Endothelial cell of umbilical vein (primary cell): ENCODE measurements at regions of chr10 and their contacts with region 1.

Region 1: GRCh38 chr10:16950656-16951601 is 133.7 kb upstream of the RSU1 start:
- DNase-seq: peak; percentile 89
- H3K4me3 ChIP-seq: no peak overlapping the region
- H3K27ac ChIP-seq: peak overlapping the region; percentile 66
- H3K4me1 ChIP-seq: peaks cover 40% of the 10 kb centered on the region
- H3K27me3 ChIP-seq: no peaks in the 10 kb centered on the region
- CTCF ChIP-seq: no peak
- POLR2A ChIP-seq: no peak

Region 2: GRCh38 chr10:15642095-15642494 is 1308.8 kb before region 1 on chr10:
- CTCF ChIA-PET with region 1: no interaction called
- POLR2A ChIA-PET with region 1: no interaction called
- dilution Hi-C with region 1: no loop called
- intact Hi-C with region 1: no loop called
- DNase-seq: peak; percentile 67
- H3K4me3 ChIP-seq: no peak overlapping the region
- H3K27ac ChIP-seq: no peak overlapping the region
- H3K4me1 ChIP-seq: peaks cover 8% of the 10 kb centered on the region
- H3K27me3 ChIP-seq: no peaks in the 10 kb centered on the region
- CTCF ChIP-seq: no peak
- POLR2A ChIP-seq: no peak

Region 3: GRCh38 chr10:16909961-16910792 is 40.8 kb before region 1 on chr10:
- CTCF ChIA-PET with region 1: no interaction called
- POLR2A ChIA-PET with region 1: no interaction called
- dilution Hi-C with region 1: no loop called
- intact Hi-C with region 1: loop called (anchors 1 kb)
- DNase-seq: peak; percentile 60
- H3K4me3 ChIP-seq: no peak overlapping the region
- H3K27ac ChIP-seq: peak overlapping the region; percentile 82
- H3K4me1 ChIP-seq: peaks cover 20% of the 10 kb centered on the region
- H3K27me3 ChIP-seq: no peaks in the 10 kb centered on the region
- CTCF ChIP-seq: no peak
- POLR2A ChIP-seq: no peak

Region 4: GRCh38 chr10:16933783-16934182 is 17.1 kb before region 1 on chr10:
- CTCF ChIA-PET with region 1: no interaction called
- POLR2A ChIA-PET with region 1: no interaction called
- dilution Hi-C with region 1: no loop called
- intact Hi-C with region 1: no loop called
- DNase-seq: no peak
- H3K4me3 ChIP-seq: no peak overlapping the region
- H3K27ac ChIP-seq: no peak overlapping the region
- H3K4me1 ChIP-seq: no peaks in the 10 kb centered on the region
- H3K27me3 ChIP-seq: no peaks in the 10 kb centered on the region
- CTCF ChIP-seq: no peak
- POLR2A ChIP-seq: no peak

Region 5: GRCh38 chr10:17183110-17183509 is 232.2 kb after region 1 on chr10:
- CTCF ChIA-PET with region 1: no interaction called
- POLR2A ChIA-PET with region 1: no interaction called
- dilution Hi-C with region 1: no loop called
- intact Hi-C with region 1: no loop called
- DNase-seq: no peak
- H3K4me3 ChIP-seq: no peak overlapping the region
- H3K27ac ChIP-seq: no peak overlapping the region
- H3K4me1 ChIP-seq: no peaks in the 10 kb centered on the region
- H3K27me3 ChIP-seq: no peaks in the 10 kb centered on the region
- CTCF ChIP-seq: no peak
- POLR2A ChIP-seq: no peak